ENCODE measurements at regions of chr3 and their contacts with region 1.

Region 1: GRCh38 chr3:151290673-151291072 is 12.3 kb upstream of the P2RY14 start:
- DNase-seq: peak; percentile 56
- H3K4me3 Mint-ChIP-seq: no peak overlapping the region
- H3K27ac Mint-ChIP-seq: no peak overlapping the region
- H3K4me1 Mint-ChIP-seq: no peaks in the 10 kb centered on the region
- H3K27me3 Mint-ChIP-seq: no peaks in the 10 kb centered on the region
- CTCF ChIP-seq: peak; percentile 75

Region 2: GRCh38 chr3:150094150-150094925 is 1196.3 kb before region 1 on chr3:
- CTCF ChIA-PET with region 1: no interaction called
- POLR2A ChIA-PET with region 1: no interaction called
- intact Hi-C with region 1: no loop called
- DNase-seq: peak; percentile 86
- H3K4me3 Mint-ChIP-seq: no peak overlapping the region
- H3K27ac Mint-ChIP-seq: peak overlapping the region; percentile 12
- H3K4me1 Mint-ChIP-seq: peaks cover 22% of the 10 kb centered on the region
- H3K27me3 Mint-ChIP-seq: no peaks in the 10 kb centered on the region
- CTCF ChIP-seq: no peak

Region 3: DNA sequence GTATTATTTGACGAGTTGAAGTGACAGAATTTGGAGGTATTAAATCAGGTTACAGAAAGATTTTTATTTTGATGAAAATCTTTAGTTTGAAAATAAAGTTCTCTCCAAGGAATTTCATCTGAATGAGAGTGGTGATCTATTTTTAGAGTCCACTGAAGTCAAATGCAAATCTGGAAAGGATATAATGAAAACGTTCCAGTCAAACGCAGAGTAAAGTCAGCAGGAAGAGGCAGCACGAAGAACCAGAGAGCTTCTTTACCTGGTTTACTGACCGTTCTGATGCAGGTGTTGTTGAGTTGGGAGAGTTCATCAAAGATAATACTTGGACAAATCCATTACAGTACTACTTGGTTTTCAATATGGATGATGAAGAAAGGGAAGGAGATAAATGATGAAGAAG is 21.0 kb before region 1 on chr3:
- CTCF ChIA-PET with region 1: no interaction called
- POLR2A ChIA-PET with region 1: no interaction called
- intact Hi-C with region 1: no loop called
- DNase-seq: no peak
- H3K4me3 Mint-ChIP-seq: no peak overlapping the region
- H3K27ac Mint-ChIP-seq: no peak overlapping the region
- H3K4me1 Mint-ChIP-seq: no peaks in the 10 kb centered on the region
- H3K27me3 Mint-ChIP-seq: no peaks in the 10 kb centered on the region
- CTCF ChIP-seq: no peak

Region 4: GRCh38 chr3:151305101-151305750 is 14.6 kb after region 1 on chr3:
- CTCF ChIA-PET with region 1: interaction called, 10 read pairs
- POLR2A ChIA-PET with region 1: interaction called, 15 read pairs
- intact Hi-C with region 1: no loop called
- DNase-seq: peak; percentile 98
- H3K4me3 Mint-ChIP-seq: peak overlapping the region; percentile 60
- H3K27ac Mint-ChIP-seq: peak overlapping the region; percentile 79
- H3K4me1 Mint-ChIP-seq: peaks cover 89% of the 10 kb centered on the region
- H3K27me3 Mint-ChIP-seq: no peaks in the 10 kb centered on the region
- CTCF ChIP-seq: no peak

Region 5: DNA sequence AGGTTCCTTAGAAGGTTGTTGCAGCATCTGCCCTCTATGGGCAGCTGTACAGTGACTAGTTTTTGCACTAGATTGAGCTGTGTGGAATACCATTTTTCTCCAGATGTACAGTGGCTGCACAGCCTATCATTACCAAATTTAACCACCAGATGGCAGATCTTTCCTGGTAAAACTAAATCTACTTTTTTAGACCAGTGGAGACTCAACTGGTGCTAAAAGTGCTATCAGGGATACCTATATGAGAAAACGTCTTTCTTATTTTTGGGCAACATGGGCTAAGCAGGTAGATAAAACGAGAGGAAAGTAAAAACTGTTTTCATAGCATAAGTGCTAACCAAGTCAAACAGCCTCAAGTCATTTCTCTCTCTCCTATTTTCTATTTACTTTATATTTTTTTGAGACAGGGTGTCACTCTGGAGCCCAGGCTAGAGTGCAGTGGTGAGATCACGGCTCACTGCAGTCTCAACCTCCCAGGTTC is 149.0 kb after region 1 on chr3:
- CTCF ChIA-PET with region 1: interaction called, 4 read pairs
- POLR2A ChIA-PET with region 1: interaction called, 4 read pairs
- intact Hi-C with region 1: loop called (anchors 1 kb)
- DNase-seq: peak; percentile 67
- H3K4me3 Mint-ChIP-seq: no peak overlapping the region
- H3K27ac Mint-ChIP-seq: no peak overlapping the region
- H3K4me1 Mint-ChIP-seq: no peaks in the 10 kb centered on the region
- H3K27me3 Mint-ChIP-seq: no peaks in the 10 kb centered on the region
- CTCF ChIP-seq: peak; percentile 42

Region 6: GRCh38 chr3:151660885-151661284 is 370.2 kb after region 1 on chr3:
- CTCF ChIA-PET with region 1: no interaction called
- POLR2A ChIA-PET with region 1: no interaction called
- intact Hi-C with region 1: loop called (anchors 2 kb)
- DNase-seq: peak; percentile 13
- H3K4me3 Mint-ChIP-seq: no peak overlapping the region
- H3K27ac Mint-ChIP-seq: no peak overlapping the region
- H3K4me1 Mint-ChIP-seq: no peaks in the 10 kb centered on the region
- H3K27me3 Mint-ChIP-seq: no peaks in the 10 kb centered on the region
- CTCF ChIP-seq: peak; percentile 7

Measured in MCF 10A (cell line).